ENCODE measurements at regions of chr12 and their contacts with region 1.

Region 1: GRCh38 chr12:116708826-116709756 is 28.8 kb downstream of the SPRING1 start:
- DNase-seq: peak; percentile 63
- H3K4me3 Mint-ChIP-seq: no peak overlapping the region
- H3K27ac Mint-ChIP-seq: no peak overlapping the region
- H3K4me1 Mint-ChIP-seq: peaks cover 7% of the 10 kb centered on the region
- H3K27me3 Mint-ChIP-seq: peaks cover 22% of the 10 kb centered on the region

Region 2: DNA sequence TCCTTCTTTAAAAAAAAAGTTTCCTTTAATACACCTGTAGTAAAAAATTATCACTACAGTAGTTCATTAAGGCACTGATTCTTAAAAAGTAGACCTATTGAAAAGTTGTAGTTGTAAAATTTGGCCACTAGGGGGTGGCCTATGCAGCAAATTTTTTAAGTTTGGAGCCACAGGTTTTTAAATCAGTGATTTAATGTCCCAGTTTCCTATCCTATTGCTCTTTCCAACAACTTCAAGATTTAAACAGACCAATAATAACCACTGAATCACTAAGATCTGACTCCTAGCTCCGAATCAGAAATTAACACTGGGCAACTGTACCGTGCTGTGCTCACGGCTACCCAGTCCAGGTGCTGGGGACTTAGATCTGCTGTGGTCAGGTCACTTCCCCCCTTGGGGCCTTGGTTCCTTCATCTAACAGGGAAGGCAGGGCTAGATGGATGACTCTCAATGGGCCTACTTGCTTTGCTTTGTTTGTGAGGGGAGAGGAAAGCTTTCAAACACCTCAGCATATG is 710.9 kb before region 1 on chr12:
- CTCF ChIA-PET with region 1: interaction called, 10 read pairs
- DNase-seq: no peak
- H3K4me3 Mint-ChIP-seq: no peak overlapping the region
- H3K27ac Mint-ChIP-seq: no peak overlapping the region
- H3K4me1 Mint-ChIP-seq: no peaks in the 10 kb centered on the region
- H3K27me3 Mint-ChIP-seq: no peaks in the 10 kb centered on the region

Region 3: GRCh38 chr12:116722245-116722644 is 13.2 kb after region 1 on chr12:
- CTCF ChIA-PET with region 1: interaction called, 11 read pairs
- DNase-seq: no peak
- H3K4me3 Mint-ChIP-seq: no peak overlapping the region
- H3K27ac Mint-ChIP-seq: no peak overlapping the region
- H3K4me1 Mint-ChIP-seq: peaks cover 3% of the 10 kb centered on the region
- H3K27me3 Mint-ChIP-seq: no peaks in the 10 kb centered on the region

Region 4: DNA sequence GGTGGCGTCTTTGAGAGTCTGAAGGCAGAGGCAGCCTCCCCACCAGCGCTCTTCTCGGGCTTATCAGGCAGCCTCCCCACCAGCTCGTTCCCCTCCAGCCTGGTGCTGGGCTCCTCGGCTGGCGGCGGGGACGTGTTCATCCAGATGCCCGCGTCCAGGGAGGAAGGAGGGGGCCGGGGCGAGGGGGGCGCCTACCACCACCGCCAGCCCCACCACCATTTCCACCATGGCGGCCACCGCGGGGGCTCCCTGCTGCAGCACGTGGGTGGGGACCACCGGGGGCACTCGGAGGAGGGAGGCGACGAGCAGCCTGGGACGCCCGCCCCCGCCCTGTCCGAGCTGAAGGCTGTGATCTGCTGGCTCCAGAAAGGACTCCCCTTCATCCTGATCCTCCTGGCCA is 40.8 kb after region 1 on chr12:
- CTCF ChIA-PET with region 1: no interaction called
- DNase-seq: no peak
- H3K4me3 Mint-ChIP-seq: no peak overlapping the region
- H3K27ac Mint-ChIP-seq: no peak overlapping the region
- H3K4me1 Mint-ChIP-seq: peaks cover 6% of the 10 kb centered on the region
- H3K27me3 Mint-ChIP-seq: no peaks in the 10 kb centered on the region

Region 5: DNA sequence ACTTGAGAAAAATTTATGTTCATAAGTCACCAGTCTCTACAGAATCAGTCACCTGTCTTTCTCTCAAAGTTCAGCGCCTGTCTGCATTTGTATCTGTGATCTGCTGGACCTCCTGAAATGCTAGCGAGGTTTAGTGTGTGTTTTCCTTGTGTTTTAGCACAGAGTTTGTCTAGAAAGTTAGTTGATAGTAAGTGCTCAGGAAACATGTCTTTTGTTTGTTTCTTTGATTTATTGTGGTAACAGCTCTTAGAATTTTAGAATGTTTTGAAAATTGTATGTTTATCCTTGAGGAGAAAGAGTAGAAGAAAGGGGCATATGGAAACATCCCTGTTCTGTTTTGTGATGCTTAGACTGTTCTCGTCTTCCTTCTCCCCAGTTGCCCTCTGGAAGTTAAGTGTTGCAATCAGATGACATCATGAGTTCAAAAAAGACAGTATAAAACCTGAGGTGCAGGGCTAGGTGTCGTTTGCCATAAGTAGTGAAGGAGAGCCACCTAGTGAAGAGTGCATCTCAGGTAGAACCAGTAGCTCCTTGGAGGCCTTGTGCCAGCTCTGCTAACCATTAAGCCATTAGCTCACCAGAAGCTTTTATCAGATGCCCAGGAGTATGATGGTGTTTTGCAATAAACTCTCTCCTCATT is 246.4 kb after region 1 on chr12:
- CTCF ChIA-PET with region 1: interaction called, 20 read pairs
- DNase-seq: peak; percentile 46
- H3K4me3 Mint-ChIP-seq: no peak overlapping the region
- H3K27ac Mint-ChIP-seq: no peak overlapping the region
- H3K4me1 Mint-ChIP-seq: peaks cover 35% of the 10 kb centered on the region
- H3K27me3 Mint-ChIP-seq: no peaks in the 10 kb centered on the region

Measured in activated naive CD4-positive, alpha-beta T cell treated with anti-CD3 and anti-CD28 coated beads, Interleukin-2, amount 10 ng/mL, durations not matched to agents 7 days and 5 days (primary cell).